Caco-2 (cell line): ENCODE measurements at regions of chr14 and their contacts with region 1.

Region 1: GRCh38 chr14:71720978-71721624 is 211.1 kb upstream of the RGS6 start:
- DNase-seq: peak; percentile 57 to 59
- H3K4me3 ChIP-seq: no peak overlapping the region
- H3K4me3 Mint-ChIP-seq: no peak overlapping the region
- H3K27ac Mint-ChIP-seq: no peak overlapping the region
- H3K4me1 ChIP-seq: no peaks in the 10 kb centered on the region
- H3K4me1 Mint-ChIP-seq: peaks cover 9% of the 10 kb centered on the region
- H3K27me3 ChIP-seq: no peaks in the 10 kb centered on the region
- H3K27me3 Mint-ChIP-seq: no peaks in the 10 kb centered on the region
- CTCF ChIP-seq: peak; percentile 36 to 50

Region 2: GRCh38 chr14:71497645-71498086 is 223.4 kb before region 1 on chr14:
- CTCF ChIA-PET with region 1: no interaction called
- POLR2A ChIA-PET with region 1: no interaction called
- intact Hi-C with region 1: no loop called
- DNase-seq: no peak
- H3K4me3 ChIP-seq: no peak overlapping the region
- H3K4me3 Mint-ChIP-seq: no peak overlapping the region
- H3K27ac Mint-ChIP-seq: no peak overlapping the region
- H3K4me1 ChIP-seq: no peaks in the 10 kb centered on the region
- H3K4me1 Mint-ChIP-seq: no peaks in the 10 kb centered on the region
- H3K27me3 ChIP-seq: no peaks in the 10 kb centered on the region
- H3K27me3 Mint-ChIP-seq: no peaks in the 10 kb centered on the region
- CTCF ChIP-seq: no peak

Region 3: GRCh38 chr14:71855399-71856036 is 134.4 kb after region 1 on chr14:
- CTCF ChIA-PET with region 1: interaction called, 4 read pairs
- POLR2A ChIA-PET with region 1: no interaction called
- intact Hi-C with region 1: loop called (anchors 10 kb)
- DNase-seq: peak; percentile 58 to 74
- H3K4me3 ChIP-seq: no peak overlapping the region
- H3K4me3 Mint-ChIP-seq: no peak overlapping the region
- H3K27ac Mint-ChIP-seq: no peak overlapping the region
- H3K4me1 ChIP-seq: no peaks in the 10 kb centered on the region
- H3K4me1 Mint-ChIP-seq: no peaks in the 10 kb centered on the region
- H3K27me3 ChIP-seq: no peaks in the 10 kb centered on the region
- H3K27me3 Mint-ChIP-seq: peaks cover 4% of the 10 kb centered on the region
- CTCF ChIP-seq: peak; percentile 56 to 61

Region 4: DNA sequence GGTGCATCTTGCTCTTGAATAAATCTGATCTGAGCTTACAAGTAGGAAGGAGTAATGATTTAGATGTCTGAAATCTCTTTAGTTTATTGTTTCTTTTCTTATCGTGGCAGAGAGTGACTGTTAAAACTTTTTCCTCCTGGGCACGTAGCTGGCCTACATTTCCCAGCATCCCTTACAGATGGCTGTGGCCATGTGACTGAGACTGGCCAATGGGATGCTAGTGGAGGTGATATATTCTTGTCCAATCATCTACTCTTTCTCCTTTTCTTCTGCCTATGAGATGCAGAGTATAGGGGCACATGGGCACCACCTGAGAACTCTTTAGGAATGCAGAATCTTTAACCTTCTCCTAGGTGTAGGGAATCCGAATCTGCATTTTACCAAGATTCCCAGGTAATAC is 448.4 kb after region 1 on chr14:
- CTCF ChIA-PET with region 1: no interaction called
- POLR2A ChIA-PET with region 1: no interaction called
- intact Hi-C with region 1: no loop called
- DNase-seq: peak in 1 of 2 experiments; percentile 5
- H3K4me3 ChIP-seq: no peak overlapping the region
- H3K4me3 Mint-ChIP-seq: no peak overlapping the region
- H3K27ac Mint-ChIP-seq: no peak overlapping the region
- H3K4me1 ChIP-seq: no peaks in the 10 kb centered on the region
- H3K4me1 Mint-ChIP-seq: no peaks in the 10 kb centered on the region
- H3K27me3 ChIP-seq: no peaks in the 10 kb centered on the region
- H3K27me3 Mint-ChIP-seq: peaks cover 3% of the 10 kb centered on the region
- CTCF ChIP-seq: no peak